CD14-positive monocyte (primary cell): ENCODE measurements at regions of chr10 and their contacts with region 1.

Region 1: GRCh38 chr10:26881600-26882331 is 21.0 kb upstream of the ABI1 start:
- DNase-seq: peak; percentile 22 to 66 (median 54)
- H3K4me3 ChIP-seq: no peak overlapping the region
- H3K4me3 Mint-ChIP-seq: peak overlapping the region in 1 of 2 donors; percentile 74
- H3K27ac ChIP-seq: no peak overlapping the region
- H3K27ac Mint-ChIP-seq: no peak overlapping the region
- H3K4me1 ChIP-seq: no peaks in the 10 kb centered on the region
- H3K4me1 Mint-ChIP-seq: peaks cover 5% of the 10 kb centered on the region
- H3K27me3 ChIP-seq: peaks cover 0 to 3% of the 10 kb centered on the region in 2 donors
- H3K27me3 Mint-ChIP-seq: peaks cover 8 to 13% (median 9%) of the 10 kb centered on the region in 3 donors
- CTCF ChIP-seq: peak; percentile 79

Region 2: GRCh38 chr10:26334932-26335573 is 546.7 kb before region 1 on chr10:
- intact Hi-C with region 1: loop called in 1 of 2 experiments (anchors 10 kb)
- DNase-seq: peak; percentile 63 to 75 (median 73)
- H3K4me3 ChIP-seq: peak overlapping the region; percentile 51 to 89 (median 70)
- H3K4me3 Mint-ChIP-seq: peak overlapping the region; percentile 84 to 90
- H3K27ac ChIP-seq: peak overlapping the region in 1 of 2 donors; percentile 68
- H3K27ac Mint-ChIP-seq: peak overlapping the region in 6 of 7 donors; percentile 7 to 90 (median 80)
- H3K4me1 ChIP-seq: peaks cover 19 to 22% of the 10 kb centered on the region in 2 donors
- H3K4me1 Mint-ChIP-seq: peaks cover 15% of the 10 kb centered on the region
- H3K27me3 ChIP-seq: no peaks in the 10 kb centered on the region
- H3K27me3 Mint-ChIP-seq: peaks cover 0 to 2% (median 1%) of the 10 kb centered on the region in 3 donors
- CTCF ChIP-seq: peak; percentile 95

Region 3: GRCh38 chr10:26725837-26726727 is 155.7 kb before region 1 on chr10:
- intact Hi-C with region 1: loop called in 1 of 2 experiments (anchors 2 kb)
- DNase-seq: peak; percentile 39 to 59 (median 48)
- H3K4me3 ChIP-seq: no peak overlapping the region
- H3K4me3 Mint-ChIP-seq: no peak overlapping the region
- H3K27ac ChIP-seq: no peak overlapping the region
- H3K27ac Mint-ChIP-seq: peak overlapping the region in 3 of 7 donors; percentile 50 to 82 (median 51)
- H3K4me1 ChIP-seq: no peaks in the 10 kb centered on the region
- H3K4me1 Mint-ChIP-seq: peaks cover 5% of the 10 kb centered on the region
- H3K27me3 ChIP-seq: no peaks in the 10 kb centered on the region
- H3K27me3 Mint-ChIP-seq: no peaks in the 10 kb centered on the region
- CTCF ChIP-seq: peak; percentile 90

Region 4: DNA sequence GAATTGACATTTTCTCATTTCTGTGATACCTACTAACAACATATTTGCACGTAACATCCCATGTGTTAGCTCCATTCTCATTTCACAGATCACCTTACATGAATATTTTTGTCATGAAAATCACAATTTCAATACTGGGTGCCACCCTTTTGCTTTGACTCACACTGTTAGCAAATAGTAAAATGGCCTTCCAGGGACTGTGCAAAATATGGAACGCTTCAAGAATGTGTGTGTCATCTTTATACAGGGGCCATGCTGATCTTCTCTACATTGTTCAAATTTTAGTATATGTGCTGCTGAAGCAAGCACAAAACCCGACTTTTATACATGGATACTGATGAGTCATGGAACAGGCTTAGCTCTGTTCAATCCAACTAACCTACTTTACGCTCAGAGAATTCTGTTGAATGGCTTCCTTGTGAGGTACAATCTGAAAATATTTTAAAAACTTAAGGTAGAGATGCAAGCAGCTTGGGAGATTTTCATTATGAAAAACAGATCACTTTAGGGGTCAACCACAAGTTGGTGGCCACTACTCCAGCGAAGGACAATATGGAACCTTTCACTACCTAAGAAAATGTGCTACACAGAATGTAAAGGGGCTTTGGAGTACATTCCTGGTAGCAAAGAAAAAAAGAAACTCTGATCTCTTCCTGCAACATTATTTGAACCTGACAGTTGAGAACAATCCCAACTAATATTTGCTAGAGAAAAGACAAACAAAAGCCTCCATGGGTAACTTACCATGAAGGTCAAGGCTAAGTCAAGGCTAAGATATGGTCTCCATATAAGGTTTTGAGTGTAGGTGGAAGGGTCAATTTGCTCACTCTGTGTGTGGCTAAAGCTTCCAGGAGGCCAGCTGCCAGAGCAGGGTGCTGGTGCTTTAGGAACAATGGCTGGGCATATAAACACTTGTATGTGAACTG is 206.6 kb after region 1 on chr10:
- intact Hi-C with region 1: loop called in 1 of 2 experiments (anchors 10 kb)
- DNase-seq: no peak
- H3K4me3 ChIP-seq: no peak overlapping the region
- H3K4me3 Mint-ChIP-seq: no peak overlapping the region
- H3K27ac ChIP-seq: no peak overlapping the region
- H3K27ac Mint-ChIP-seq: no peak overlapping the region
- H3K4me1 ChIP-seq: no peaks in the 10 kb centered on the region
- H3K4me1 Mint-ChIP-seq: no peaks in the 10 kb centered on the region
- H3K27me3 ChIP-seq: no peaks in the 10 kb centered on the region
- H3K27me3 Mint-ChIP-seq: no peaks in the 10 kb centered on the region
- CTCF ChIP-seq: no peak